ENCODE measurements at regions of chr17 and their contacts with region 1.

Region 1: GRCh38 chr17:44199553-44200477 is at the start of gene ATXN7L3:
- DNase-seq: peak; percentile 98
- H3K4me3 ChIP-seq: peak within 1 kb of the TSS; percentile 77 to 86 (median 86)
- H3K27ac ChIP-seq: peak within 1 kb of the TSS; percentile 80
- H3K4me1 ChIP-seq: peaks cover 31% of the 10 kb centered on the region
- H3K27me3 ChIP-seq: no peaks in the 10 kb centered on the region
- CTCF ChIP-seq: no peak
- total RNA-seq, gene ATXN7L3: 35.3 to 55.9 TPM

Region 2: GRCh38 chr17:43952717-43953666 is 246.8 kb before region 1 on chr17:
- CTCF ChIA-PET with region 1: no interaction called
- dilution Hi-C with region 1: loop called (anchors 10 kb)
- in situ Hi-C with region 1: no loop called
- intact Hi-C with region 1: no loop called
- DNase-seq: no peak
- H3K4me3 ChIP-seq: no peak overlapping the region
- H3K27ac ChIP-seq: no peak overlapping the region
- H3K4me1 ChIP-seq: peaks cover 5% of the 10 kb centered on the region
- H3K27me3 ChIP-seq: peaks cover 17% of the 10 kb centered on the region
- CTCF ChIP-seq: no peak

Region 3: DNA sequence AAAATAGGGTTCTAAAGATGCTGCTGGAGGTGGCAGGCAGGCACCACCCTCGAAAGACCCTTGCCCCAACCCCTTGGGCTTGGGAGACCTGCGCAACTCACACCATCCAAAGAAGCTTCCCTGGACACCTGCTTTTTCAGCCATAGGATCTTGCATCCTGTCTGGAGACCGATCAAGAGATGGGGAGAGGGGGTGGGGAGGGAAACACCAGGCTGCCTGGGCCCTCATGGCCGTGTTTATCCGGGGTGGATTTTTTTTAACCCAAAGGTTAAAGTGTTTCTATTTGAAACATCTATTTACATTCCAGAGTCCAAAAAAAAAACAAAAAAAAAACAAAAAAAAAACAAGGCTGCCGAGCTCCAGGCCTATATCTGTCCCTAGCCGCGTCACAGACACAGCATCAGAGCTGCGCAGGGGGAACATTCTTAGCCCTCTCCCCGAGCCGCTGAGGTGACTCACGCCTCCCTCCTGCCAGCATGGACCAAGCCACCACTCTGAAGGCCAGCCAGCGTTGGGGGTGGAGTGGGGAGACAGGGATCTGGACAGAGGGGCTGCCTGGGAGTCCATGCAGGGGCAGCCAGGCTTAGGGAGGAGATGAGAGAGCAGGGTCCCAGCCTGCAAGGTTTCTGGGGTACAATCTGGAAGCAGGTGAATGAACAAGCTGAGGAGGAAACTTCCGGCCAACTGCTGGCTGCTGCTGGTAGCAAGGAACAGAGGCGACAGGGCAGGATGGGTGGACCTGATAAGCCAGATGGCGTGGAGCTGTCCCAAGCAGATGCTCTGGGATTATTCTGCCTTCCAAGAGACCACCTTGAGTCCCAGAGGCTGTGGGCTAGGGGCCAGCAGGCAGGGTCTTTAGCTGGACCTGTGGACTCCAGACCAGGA is 91.1 kb before region 1 on chr17:
- CTCF ChIA-PET with region 1: no interaction called
- dilution Hi-C with region 1: loop called (anchors 5 kb)
- in situ Hi-C with region 1: no loop called
- intact Hi-C with region 1: no loop called
- DNase-seq: no peak
- H3K4me3 ChIP-seq: no peak overlapping the region
- H3K27ac ChIP-seq: no peak overlapping the region
- H3K4me1 ChIP-seq: peaks cover 11% of the 10 kb centered on the region
- H3K27me3 ChIP-seq: no peaks in the 10 kb centered on the region
- CTCF ChIP-seq: no peak

Region 4: GRCh38 chr17:44141717-44142285 is 58.0 kb before region 1 on chr17 and contains the start of gene HROB:
- CTCF ChIA-PET with region 1: no interaction called
- dilution Hi-C with region 1: no loop called
- in situ Hi-C with region 1: no loop called
- intact Hi-C with region 1: no loop called
- DNase-seq: peak; percentile 93
- H3K4me3 ChIP-seq: peak within 1 kb of the TSS; percentile 82 to 87 (median 86)
- H3K27ac ChIP-seq: peak within 1 kb of the TSS; percentile 92
- H3K4me1 ChIP-seq: peaks cover 24% of the 10 kb centered on the region
- H3K27me3 ChIP-seq: no peaks in the 10 kb centered on the region
- CTCF ChIP-seq: peak; percentile 93 to 95
- total RNA-seq, gene HROB: 3.0 to 10.3 TPM

Region 5: DNA sequence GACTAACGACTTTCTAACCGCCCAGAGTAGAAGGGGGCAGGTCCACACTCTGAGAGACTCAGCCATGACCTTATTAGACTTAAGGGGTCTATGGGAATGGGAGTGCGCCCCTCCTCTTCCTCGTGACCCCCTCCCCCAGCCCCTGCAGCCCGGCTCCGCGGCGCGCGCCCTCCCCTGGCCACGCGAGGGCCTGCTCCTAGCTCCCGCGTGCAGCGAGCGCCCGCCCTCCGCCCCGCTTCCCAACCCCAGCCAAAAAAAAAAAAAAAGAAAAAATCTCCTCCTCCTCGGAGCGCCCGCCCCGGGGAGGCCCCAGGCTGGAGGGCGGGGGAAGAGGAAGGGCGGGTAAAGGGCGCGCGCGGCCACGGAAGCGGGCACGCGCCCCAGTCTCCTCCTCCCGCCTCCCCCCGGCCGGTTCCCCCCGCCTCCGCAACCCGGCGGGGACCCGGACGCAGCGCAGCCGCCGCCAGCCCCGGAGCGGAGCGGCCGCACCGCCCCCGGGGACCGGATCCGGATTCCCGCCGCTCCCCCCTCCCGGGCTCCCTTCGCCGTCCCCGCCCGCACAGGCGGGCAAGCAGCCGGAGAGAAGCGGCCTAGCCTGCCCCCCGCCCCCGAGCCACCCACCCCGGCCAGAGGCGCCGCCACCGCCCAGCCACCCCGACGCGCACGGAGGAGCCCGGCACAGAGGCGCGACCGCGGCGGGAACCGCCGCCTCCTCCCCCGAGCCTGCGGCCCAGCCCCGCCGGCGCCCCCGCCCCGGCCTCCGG is 18.7 kb after region 1 on chr17:
- CTCF ChIA-PET with region 1: interaction called, 6 read pairs
- dilution Hi-C with region 1: no loop called
- in situ Hi-C with region 1: no loop called
- intact Hi-C with region 1: loop called (anchors 1 kb)
- DNase-seq: peak; percentile 90
- H3K4me3 ChIP-seq: peak overlapping the region; percentile 48 to 86 (median 84)
- H3K27ac ChIP-seq: peak overlapping the region; percentile 44
- H3K4me1 ChIP-seq: peaks cover 32% of the 10 kb centered on the region
- H3K27me3 ChIP-seq: no peaks in the 10 kb centered on the region
- CTCF ChIP-seq: peak in 1 of 2 donors; percentile 61

Region 6: GRCh38 chr17:44314869-44315661 is 115.2 kb after region 1 on chr17:
- CTCF ChIA-PET with region 1: no interaction called
- dilution Hi-C with region 1: loop called (anchors 5 kb)
- in situ Hi-C with region 1: no loop called
- intact Hi-C with region 1: no loop called
- DNase-seq: peak; percentile 59
- H3K4me3 ChIP-seq: peak overlapping the region; percentile 15 to 65 (median 55)
- H3K27ac ChIP-seq: no peak overlapping the region
- H3K4me1 ChIP-seq: peaks cover 7% of the 10 kb centered on the region
- H3K27me3 ChIP-seq: no peaks in the 10 kb centered on the region
- CTCF ChIP-seq: no peak

Region 7: DNA sequence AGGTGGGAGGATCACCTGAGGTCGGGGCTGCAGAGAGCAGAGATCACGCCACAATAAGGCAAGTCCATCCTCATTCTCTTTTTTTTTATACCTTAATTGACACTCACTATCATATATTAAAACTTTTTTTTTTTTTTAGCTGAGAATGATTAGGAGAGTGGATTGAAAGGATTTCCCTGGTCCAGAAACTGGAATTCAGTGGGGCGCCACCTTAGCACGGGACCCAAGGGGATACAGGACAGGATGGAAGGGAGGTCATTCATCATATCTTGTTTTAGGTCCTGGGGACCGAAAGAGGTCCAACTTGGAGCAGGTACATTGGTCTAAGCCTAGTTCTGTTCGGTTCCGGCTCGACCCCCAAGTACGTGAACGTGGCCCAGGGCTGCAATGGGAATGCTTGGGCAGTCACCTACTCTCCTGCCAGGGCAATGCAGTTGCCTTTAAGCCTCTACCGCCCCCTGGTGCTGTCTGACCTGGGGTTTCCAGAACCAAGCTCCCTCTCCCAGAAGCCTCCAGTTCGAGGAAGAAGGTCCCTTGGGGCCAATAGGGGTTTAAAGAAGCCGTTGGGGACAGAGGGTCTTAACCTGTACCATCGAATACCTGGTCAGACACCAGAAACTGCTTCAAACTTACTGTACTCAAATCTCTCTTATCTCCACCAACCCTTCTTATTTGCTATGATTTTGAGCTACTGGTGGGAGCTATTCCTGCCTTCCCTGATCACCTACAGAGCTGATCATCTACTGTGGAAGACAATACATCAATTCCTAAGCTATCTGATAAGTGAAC is 323.3 kb after region 1 on chr17:
- CTCF ChIA-PET with region 1: interaction called, 3 read pairs
- dilution Hi-C with region 1: no loop called
- in situ Hi-C with region 1: no loop called
- intact Hi-C with region 1: loop called (anchors 5 kb)
- DNase-seq: peak; percentile 41
- H3K4me3 ChIP-seq: no peak overlapping the region
- H3K27ac ChIP-seq: no peak overlapping the region
- H3K4me1 ChIP-seq: no peaks in the 10 kb centered on the region
- H3K27me3 ChIP-seq: no peaks in the 10 kb centered on the region
- CTCF ChIP-seq: peak; percentile 54 to 89

Measured in mammary epithelial cell (primary cell).